ENCODE measurements at regions of chr2 and their contacts with region 1.

Region 1: GRCh38 chr2:177419274-177419673 is 26.7 kb downstream of the AGPS start:
- DNase-seq: peak; percentile 28
- ATAC-seq: no peak
- H3K4me3 ChIP-seq: no peak overlapping the region
- H3K27ac ChIP-seq: no peak overlapping the region
- H3K4me1 ChIP-seq: peaks cover 9% of the 10 kb centered on the region; the same call in 1 of the 2 replicates
- H3K27me3 ChIP-seq: no peaks in the 10 kb centered on the region
- CTCF ChIP-seq: no peak

Region 2: GRCh38 chr2:177314194-177314593 is 105.1 kb before region 1 on chr2:
- CTCF ChIA-PET with region 1: no interaction called
- POLR2A ChIA-PET with region 1: no interaction called
- intact Hi-C with region 1: no loop called
- DNase-seq: peak; percentile 52
- ATAC-seq: peak; percentile 97
- H3K4me3 ChIP-seq: no peak overlapping the region
- H3K27ac ChIP-seq: no peak overlapping the region
- H3K4me1 ChIP-seq: peaks cover 8% of the 10 kb centered on the region
- H3K27me3 ChIP-seq: no peaks in the 10 kb centered on the region
- CTCF ChIP-seq: no peak

Region 3: GRCh38 chr2:177392373-177393202 is 26.7 kb before region 1 on chr2 and contains the start of gene AGPS:
- CTCF ChIA-PET with region 1: no interaction called
- POLR2A ChIA-PET with region 1: no interaction called
- intact Hi-C with region 1: loop called (anchors 2 kb)
- DNase-seq: peak; percentile 77
- ATAC-seq: peak; percentile 55
- H3K4me3 ChIP-seq: peak within 1 kb of the TSS; percentile 89
- H3K27ac ChIP-seq: peak within 1 kb of the TSS; percentile 66
- H3K4me1 ChIP-seq: peaks cover 47% of the 10 kb centered on the region
- H3K27me3 ChIP-seq: no peaks in the 10 kb centered on the region
- CTCF ChIP-seq: no peak
- total RNA-seq, gene AGPS: 147 and 229 TPM in 2 replicates

Region 4: DNA sequence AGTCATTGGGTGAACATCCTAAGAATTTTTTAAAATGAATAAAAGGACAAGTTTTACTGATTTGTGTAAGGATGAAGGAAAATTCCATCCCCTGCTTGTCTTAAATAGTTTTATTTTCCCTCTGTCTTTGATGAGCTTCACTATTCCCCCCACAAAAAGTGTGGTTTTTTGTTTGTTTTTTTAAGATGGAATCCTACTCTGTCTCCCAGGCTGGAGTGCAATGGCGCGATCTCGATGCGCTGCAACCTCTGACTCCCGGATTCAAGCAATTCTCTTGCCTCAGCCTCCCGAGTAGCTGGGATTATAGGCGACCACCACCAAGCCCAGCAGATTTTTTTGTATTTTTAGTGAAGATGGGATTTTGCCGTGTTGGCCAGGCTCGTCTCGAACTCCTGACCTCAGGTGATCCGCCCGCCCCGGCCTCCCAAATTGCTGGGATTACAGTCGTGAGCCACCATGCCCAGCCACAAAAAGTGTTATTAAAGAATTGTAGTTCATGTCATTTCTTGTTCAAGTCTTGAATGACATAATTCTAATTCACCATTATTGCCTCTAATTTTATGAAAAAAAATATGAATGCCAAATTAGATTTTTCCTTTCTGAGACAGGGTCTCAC is 65.0 kb after region 1 on chr2:
- CTCF ChIA-PET with region 1: no interaction called
- POLR2A ChIA-PET with region 1: no interaction called
- intact Hi-C with region 1: no loop called
- DNase-seq: no peak
- ATAC-seq: no peak
- H3K4me3 ChIP-seq: no peak overlapping the region
- H3K27ac ChIP-seq: no peak overlapping the region
- H3K4me1 ChIP-seq: no peaks in the 10 kb centered on the region
- H3K27me3 ChIP-seq: no peaks in the 10 kb centered on the region
- CTCF ChIP-seq: no peak